ENCODE measurements at regions of chr9 and their contacts with region 1.

Region 1: GRCh38 chr9:68416936-68417564 is 60.6 kb downstream of the PGM5 start:
- DNase-seq: peak; percentile 6
- ATAC-seq: peak; percentile 84
- H3K4me3 ChIP-seq: no peak overlapping the region
- H3K27ac ChIP-seq: no peak overlapping the region
- H3K4me1 ChIP-seq: no peaks in the 10 kb centered on the region
- H3K27me3 ChIP-seq: peaks cover 18% of the 10 kb centered on the region; the same call in 1 of the 2 replicates
- CTCF ChIP-seq: peak; percentile 4 to 66 (median 61); a peak in 4 of 6 replicates
- POLR2A ChIP-seq: no peak
- RAD21 ChIP-seq: peak; percentile 22; the same call in 1 of the 2 replicates

Region 2: DNA sequence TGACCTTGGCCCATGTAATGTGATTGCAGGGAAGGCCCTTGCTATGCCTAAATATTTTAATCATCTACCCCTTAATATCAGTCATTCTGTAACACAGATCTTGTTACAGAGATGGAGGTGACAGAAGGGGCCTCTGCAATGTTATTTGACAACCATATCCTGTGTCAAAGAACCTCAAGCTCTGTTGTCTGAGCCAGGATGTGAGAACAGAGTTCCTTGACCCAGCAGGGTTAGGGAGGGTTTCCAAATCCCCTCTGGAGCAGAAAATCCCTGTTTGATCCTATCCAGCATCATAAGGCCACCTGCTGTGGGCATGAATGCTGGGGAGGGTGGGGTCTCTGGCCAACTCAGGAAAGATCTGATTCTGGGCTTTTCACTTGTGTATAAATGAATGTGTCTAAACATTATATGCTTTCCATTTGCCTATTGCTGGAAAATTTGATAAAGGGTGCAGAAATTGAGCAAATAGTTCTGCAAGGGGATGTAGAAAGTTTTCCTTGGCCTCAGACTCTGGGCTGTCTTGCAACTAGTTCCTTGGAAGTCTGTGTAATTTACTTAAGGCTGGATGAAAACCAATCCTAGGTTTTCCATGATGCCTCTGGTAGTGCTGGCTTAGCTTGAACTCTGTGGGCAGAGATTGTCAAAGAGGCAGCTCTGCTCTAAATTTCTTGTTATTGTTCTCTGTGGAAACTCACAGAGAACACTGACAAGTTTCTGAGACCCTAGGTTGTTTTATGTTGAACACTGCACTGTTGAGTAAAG is 10.3 kb after region 1 on chr9:
- CTCF ChIA-PET with region 1: interaction called, 18 read pairs
- POLR2A ChIA-PET with region 1: no interaction called
- RAD21 ChIA-PET with region 1: no interaction called
- intact Hi-C with region 1: no loop called
- DNase-seq: no peak
- ATAC-seq: no peak
- H3K4me3 ChIP-seq: no peak overlapping the region
- H3K27ac ChIP-seq: no peak overlapping the region
- H3K4me1 ChIP-seq: no peaks in the 10 kb centered on the region
- H3K27me3 ChIP-seq: peaks cover 14% of the 10 kb centered on the region; the same call in 1 of the 2 replicates
- CTCF ChIP-seq: no peak
- POLR2A ChIP-seq: no peak
- RAD21 ChIP-seq: no peak

Region 3: DNA sequence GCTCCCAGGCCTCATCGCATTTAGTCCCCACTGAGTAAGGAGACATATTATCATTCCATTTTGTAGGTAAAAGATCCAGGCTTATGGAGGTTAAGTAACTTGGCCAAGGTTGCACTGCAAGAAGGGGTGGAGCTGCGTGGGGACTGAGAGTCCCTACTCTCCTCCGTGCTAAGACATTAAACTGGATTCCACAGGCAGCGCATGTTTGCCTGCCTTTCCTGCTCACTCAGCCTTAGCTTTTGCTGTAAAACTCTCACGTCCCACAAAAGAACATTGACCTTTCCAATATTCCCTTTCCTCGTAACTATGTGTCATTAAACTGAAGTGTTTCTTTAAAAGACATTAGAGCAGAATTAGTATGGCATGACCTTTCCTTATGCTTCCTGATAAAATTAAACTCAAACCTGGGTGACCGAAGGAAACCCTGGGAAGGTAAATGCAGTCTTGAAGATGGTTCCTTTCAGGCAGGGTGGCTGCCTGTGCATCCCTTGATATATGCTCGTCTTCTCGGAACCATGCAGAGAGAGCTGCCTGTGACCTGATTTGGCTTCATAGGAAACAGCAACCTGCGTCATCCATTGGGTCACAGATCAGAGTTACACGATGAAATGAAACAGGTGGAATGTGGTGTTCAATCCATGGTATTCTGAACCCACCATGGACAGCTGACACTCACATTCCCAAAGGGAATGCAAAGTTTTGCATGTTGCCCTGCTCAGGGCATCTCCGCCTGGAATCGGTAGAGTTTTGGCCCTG is 37.7 kb after region 1 on chr9:
- CTCF ChIA-PET with region 1: no interaction called
- POLR2A ChIA-PET with region 1: no interaction called
- RAD21 ChIA-PET with region 1: no interaction called
- intact Hi-C with region 1: loop called (anchors 5 kb)
- DNase-seq: no peak
- ATAC-seq: no peak
- H3K4me3 ChIP-seq: no peak overlapping the region
- H3K27ac ChIP-seq: no peak overlapping the region
- H3K4me1 ChIP-seq: no peaks in the 10 kb centered on the region
- H3K27me3 ChIP-seq: peaks cover 41% of the 10 kb centered on the region
- CTCF ChIP-seq: no peak
- POLR2A ChIP-seq: no peak
- RAD21 ChIP-seq: no peak

Region 4: DNA sequence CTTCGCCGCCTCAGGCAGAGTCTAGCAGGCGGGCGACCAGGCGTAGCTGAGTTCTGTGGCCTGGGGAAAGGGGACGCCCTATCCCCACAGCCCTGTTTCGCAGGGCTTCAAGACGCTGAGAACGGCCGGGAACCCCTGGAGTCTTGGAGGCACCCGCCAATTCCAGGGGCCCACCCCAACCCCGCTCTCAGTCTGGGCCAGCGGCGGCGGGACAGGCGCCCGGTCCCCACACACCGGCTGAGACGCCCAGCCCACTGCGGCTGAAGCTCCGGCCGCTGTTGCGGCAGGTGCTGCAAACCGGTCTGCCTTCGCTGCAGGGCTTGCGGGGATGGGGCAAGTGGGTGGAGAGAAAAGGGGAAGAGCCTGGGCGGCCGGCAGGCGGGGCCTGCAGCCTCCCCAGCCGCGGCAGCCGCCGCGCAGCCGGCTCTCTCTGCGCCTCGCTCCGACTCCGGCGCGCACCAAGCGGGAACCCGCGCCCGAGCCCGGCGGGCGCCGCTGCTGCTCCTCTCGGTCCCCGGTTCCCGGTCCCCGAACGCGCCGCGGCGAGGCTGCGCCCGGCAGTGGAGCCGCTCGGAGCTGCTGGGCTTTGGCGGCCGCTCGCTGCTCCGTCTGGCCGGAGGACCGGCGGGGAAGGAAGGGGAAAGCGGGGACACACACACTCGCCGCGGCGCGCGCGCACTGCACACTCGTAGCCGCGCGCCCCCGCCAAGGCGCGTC is 287.9 kb after region 1 on chr9 and contains the start of gene PIP5K1B:
- CTCF ChIA-PET with region 1: no interaction called
- POLR2A ChIA-PET with region 1: no interaction called
- RAD21 ChIA-PET with region 1: no interaction called
- intact Hi-C with region 1: no loop called
- DNase-seq: no peak
- ATAC-seq: no peak
- H3K4me3 ChIP-seq: no peak within 1 kb of the TSS
- H3K27ac ChIP-seq: no peak within 1 kb of the TSS
- H3K4me1 ChIP-seq: no peaks in the 10 kb centered on the region
- H3K27me3 ChIP-seq: peaks cover 32% of the 10 kb centered on the region
- CTCF ChIP-seq: no peak
- POLR2A ChIP-seq: no peak
- RAD21 ChIP-seq: no peak
- total RNA-seq, gene PIP5K1B: 0.20 TPM